ENCODE measurements at regions of chr10 and their contacts with region 1.

Region 1: GRCh38 chr10:22823109-22823508 is 104.7 kb upstream of the ARMC3 start:
- DNase-seq: peak; percentile 53 to 88
- H3K4me3 ChIP-seq: no peak overlapping the region
- H3K27ac ChIP-seq: peak overlapping the region; percentile 82
- H3K4me1 ChIP-seq: peaks cover 25% of the 10 kb centered on the region
- H3K27me3 ChIP-seq: no peaks in the 10 kb centered on the region
- CTCF ChIP-seq: no peak

Region 2: DNA sequence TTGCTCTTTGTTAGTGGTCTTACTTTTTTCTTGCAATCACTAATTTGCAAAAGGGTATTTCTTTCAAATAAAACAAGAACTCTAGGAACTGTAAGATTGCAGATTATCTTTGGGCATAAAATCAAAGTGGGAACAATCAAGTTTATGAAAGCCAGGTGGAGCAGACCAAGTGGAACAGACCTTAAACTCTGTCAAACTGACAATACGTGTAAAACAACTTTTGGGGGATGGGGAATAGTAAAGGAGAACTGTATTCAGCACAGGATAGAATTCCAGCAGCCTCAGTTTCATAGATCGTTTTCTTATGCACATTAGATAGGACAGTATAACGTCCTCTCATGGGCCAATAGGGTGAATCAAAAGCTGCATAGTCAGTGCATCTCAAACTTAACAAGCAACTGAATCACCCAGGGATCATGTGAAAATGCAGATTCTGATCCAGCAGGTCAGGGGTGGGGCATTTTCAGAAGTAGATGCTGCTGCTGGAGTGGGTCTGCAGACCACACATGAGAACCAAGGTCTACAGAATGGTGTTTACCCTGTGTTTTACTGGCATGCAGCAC is 229.4 kb before region 1 on chr10:
- CTCF ChIA-PET with region 1: no interaction called
- POLR2A ChIA-PET with region 1: no interaction called
- intact Hi-C with region 1: no loop called
- DNase-seq: no peak
- H3K4me3 ChIP-seq: no peak overlapping the region
- H3K27ac ChIP-seq: no peak overlapping the region
- H3K4me1 ChIP-seq: peaks cover 4% of the 10 kb centered on the region
- H3K27me3 ChIP-seq: no peaks in the 10 kb centered on the region
- CTCF ChIP-seq: no peak

Region 3: GRCh38 chr10:22606164-22606614 is 216.9 kb before region 1 on chr10:
- CTCF ChIA-PET with region 1: no interaction called
- POLR2A ChIA-PET with region 1: no interaction called
- intact Hi-C with region 1: loop called (anchors 10 kb)
- DNase-seq: no peak
- H3K4me3 ChIP-seq: no peak overlapping the region
- H3K27ac ChIP-seq: no peak overlapping the region
- H3K4me1 ChIP-seq: no peaks in the 10 kb centered on the region
- H3K27me3 ChIP-seq: no peaks in the 10 kb centered on the region
- CTCF ChIP-seq: no peak

Region 4: DNA sequence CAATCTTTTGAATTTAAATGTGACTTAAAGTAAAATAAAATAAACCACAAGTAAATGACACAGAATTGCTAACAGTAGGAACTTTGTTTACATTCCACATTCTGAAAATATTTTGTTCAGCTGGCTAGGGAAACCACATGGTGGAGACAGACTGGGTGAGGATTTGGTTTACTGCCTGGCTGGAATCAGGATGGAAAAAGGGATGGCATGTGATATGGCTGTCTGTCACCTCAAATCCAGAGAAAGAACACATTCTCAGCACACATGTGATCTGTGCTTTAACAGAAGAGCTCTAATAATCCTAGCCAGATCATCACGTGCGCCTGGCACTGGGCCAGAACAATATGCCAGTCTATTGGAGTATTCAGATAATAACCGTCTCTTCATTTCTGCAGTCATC is 17.8 kb before region 1 on chr10:
- CTCF ChIA-PET with region 1: no interaction called
- POLR2A ChIA-PET with region 1: no interaction called
- intact Hi-C with region 1: no loop called
- DNase-seq: no peak
- H3K4me3 ChIP-seq: no peak overlapping the region
- H3K27ac ChIP-seq: no peak overlapping the region
- H3K4me1 ChIP-seq: peaks cover 16% of the 10 kb centered on the region; the same call in 1 of the 2 replicates
- H3K27me3 ChIP-seq: no peaks in the 10 kb centered on the region
- CTCF ChIP-seq: no peak